CD4-positive, alpha-beta memory T cell (primary cell): ENCODE measurements at regions of chr12 and their contacts with region 1.

Region 1: GRCh38 chr12:45728630-45729232 is 775 bp upstream of the ARID2 start:
- DNase-seq: peak; percentile 97 to 98 (median 98)
- H3K4me3 ChIP-seq: peak overlapping the region; percentile 78 to 89
- H3K4me3 Mint-ChIP-seq: peak overlapping the region; percentile 92 to 100 (median 100)
- H3K27ac ChIP-seq: peak overlapping the region; percentile 98
- H3K27ac Mint-ChIP-seq: peak overlapping the region; percentile 87 to 99 (median 99)
- H3K4me1 ChIP-seq: peaks cover 41% of the 10 kb centered on the region
- H3K4me1 Mint-ChIP-seq: peaks cover 18 to 56% (median 24%) of the 10 kb centered on the region in 4 donors
- H3K27me3 ChIP-seq: no peaks in the 10 kb centered on the region
- H3K27me3 Mint-ChIP-seq: no peaks in the 10 kb centered on the region

Region 2: DNA sequence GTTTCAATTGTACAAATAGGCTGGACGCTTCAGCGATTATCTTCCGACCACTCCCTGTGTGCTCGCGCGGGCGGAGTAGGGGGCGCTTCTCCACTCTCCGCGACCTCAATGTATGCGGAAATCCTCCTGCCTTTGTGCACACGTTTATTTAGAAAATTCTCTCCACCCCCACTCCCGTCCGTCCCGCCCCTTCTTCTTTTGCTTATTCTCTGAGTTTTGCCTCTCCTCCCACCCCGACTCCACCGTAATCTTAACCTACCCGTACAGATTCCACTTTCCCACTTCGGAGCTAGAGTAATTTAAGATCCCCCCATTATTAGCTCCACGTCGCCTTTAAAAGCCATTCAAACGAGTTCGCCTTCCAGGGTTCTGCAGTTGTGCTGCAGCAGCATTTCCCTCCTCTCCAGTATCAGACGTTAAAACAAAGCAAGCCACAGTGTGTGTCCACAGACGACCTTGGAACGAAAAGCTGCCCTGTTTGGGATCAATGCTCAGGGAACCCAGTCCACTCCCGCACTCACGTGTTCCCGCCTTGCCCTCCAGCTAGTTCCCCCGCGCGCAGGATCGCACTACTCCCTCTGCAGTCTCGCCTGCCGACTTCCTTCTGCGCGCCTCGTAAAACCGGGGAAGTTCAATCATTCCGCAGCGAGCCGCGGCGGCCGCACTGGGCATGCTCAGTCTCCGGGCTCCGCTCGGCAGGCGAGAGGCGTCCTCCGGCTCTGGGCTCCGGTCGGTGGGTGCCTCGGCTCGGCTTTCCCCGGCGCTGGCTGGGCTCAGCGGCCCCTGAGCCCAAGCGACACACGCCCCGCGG is 513.1 kb before region 1 on chr12 and contains the start of gene ANO6:
- CTCF ChIA-PET with region 1: interaction called, 4 read pairs
- POLR2A ChIA-PET with region 1: interaction called, 20 read pairs
- intact Hi-C with region 1: loop called (anchors 1 kb)
- DNase-seq: peak; percentile 73 to 81 (median 76)
- H3K4me3 ChIP-seq: peak within 1 kb of the TSS; percentile 68 to 94
- H3K4me3 Mint-ChIP-seq: peak within 1 kb of the TSS; percentile 92 to 99 (median 96)
- H3K27ac ChIP-seq: peak within 1 kb of the TSS; percentile 69
- H3K27ac Mint-ChIP-seq: peak within 1 kb of the TSS; percentile 81 to 98 (median 95)
- H3K4me1 ChIP-seq: peaks cover 48% of the 10 kb centered on the region
- H3K4me1 Mint-ChIP-seq: peaks cover 34 to 77% (median 53%) of the 10 kb centered on the region in 4 donors
- H3K27me3 ChIP-seq: no peaks in the 10 kb centered on the region
- H3K27me3 Mint-ChIP-seq: no peaks in the 10 kb centered on the region
- total RNA-seq, gene ANO6: 29.5 to 32.6 TPM

Region 3: GRCh38 chr12:45637706-45638105 is 91.0 kb before region 1 on chr12:
- CTCF ChIA-PET with region 1: no interaction called
- POLR2A ChIA-PET with region 1: no interaction called
- intact Hi-C with region 1: no loop called
- DNase-seq: no peak
- H3K4me3 ChIP-seq: no peak overlapping the region
- H3K4me3 Mint-ChIP-seq: no peak overlapping the region
- H3K27ac ChIP-seq: no peak overlapping the region
- H3K27ac Mint-ChIP-seq: no peak overlapping the region
- H3K4me1 ChIP-seq: no peaks in the 10 kb centered on the region
- H3K4me1 Mint-ChIP-seq: peaks cover 0 to 4% (median 1%) of the 10 kb centered on the region in 4 donors
- H3K27me3 ChIP-seq: no peaks in the 10 kb centered on the region
- H3K27me3 Mint-ChIP-seq: peaks cover 0 to 1% of the 10 kb centered on the region in 2 donors

Region 4: DNA sequence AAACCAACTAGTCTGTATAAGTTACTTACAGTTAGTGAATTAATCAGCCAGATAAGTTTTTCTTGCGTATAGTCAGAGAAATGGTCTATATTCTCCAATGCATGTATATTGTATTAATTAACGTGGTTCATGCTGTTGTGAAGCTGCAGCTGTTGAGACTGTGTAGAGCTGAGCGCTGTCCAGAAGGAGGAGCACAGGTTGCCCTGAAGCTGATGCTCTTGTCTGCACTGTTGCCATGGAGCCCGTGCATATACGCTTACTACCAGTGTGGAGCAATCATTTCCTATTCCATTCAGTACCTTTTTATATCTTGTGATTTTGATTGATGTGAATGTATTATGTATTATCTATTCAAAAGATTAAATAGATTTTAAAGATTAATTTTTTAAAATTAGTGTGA is 73.5 kb before region 1 on chr12:
- CTCF ChIA-PET with region 1: interaction called, 43 read pairs
- POLR2A ChIA-PET with region 1: interaction called, 15 read pairs
- intact Hi-C with region 1: loop called (anchors 1 kb)
- DNase-seq: peak; percentile 49 to 81 (median 70)
- H3K4me3 ChIP-seq: no peak overlapping the region
- H3K4me3 Mint-ChIP-seq: no peak overlapping the region
- H3K27ac ChIP-seq: no peak overlapping the region
- H3K27ac Mint-ChIP-seq: no peak overlapping the region
- H3K4me1 ChIP-seq: no peaks in the 10 kb centered on the region
- H3K4me1 Mint-ChIP-seq: peaks cover 0 to 8% (median 4%) of the 10 kb centered on the region in 4 donors
- H3K27me3 ChIP-seq: no peaks in the 10 kb centered on the region
- H3K27me3 Mint-ChIP-seq: peaks cover 8 to 9% of the 10 kb centered on the region in 2 donors

Region 5: GRCh38 chr12:45745861-45746277 is 17.1 kb after region 1 on chr12:
- CTCF ChIA-PET with region 1: interaction called, 94 read pairs
- POLR2A ChIA-PET with region 1: interaction called, 59 read pairs
- intact Hi-C with region 1: loop called (anchors 1 kb)
- DNase-seq: peak in 4 of 5 donors; percentile 37 to 57 (median 48)
- H3K4me3 ChIP-seq: no peak overlapping the region
- H3K4me3 Mint-ChIP-seq: no peak overlapping the region
- H3K27ac ChIP-seq: no peak overlapping the region
- H3K27ac Mint-ChIP-seq: peak overlapping the region in 2 of 7 donors; percentile 12 to 64
- H3K4me1 ChIP-seq: peaks cover 50% of the 10 kb centered on the region
- H3K4me1 Mint-ChIP-seq: peaks cover 37 to 73% (median 50%) of the 10 kb centered on the region in 4 donors
- H3K27me3 ChIP-seq: no peaks in the 10 kb centered on the region
- H3K27me3 Mint-ChIP-seq: no peaks in the 10 kb centered on the region

Region 6: GRCh38 chr12:45933504-45933903 is 204.8 kb after region 1 on chr12:
- CTCF ChIA-PET with region 1: no interaction called
- POLR2A ChIA-PET with region 1: no interaction called
- intact Hi-C with region 1: loop called (anchors 5 kb)
- DNase-seq: no peak
- H3K4me3 ChIP-seq: no peak overlapping the region
- H3K4me3 Mint-ChIP-seq: no peak overlapping the region
- H3K27ac ChIP-seq: no peak overlapping the region
- H3K27ac Mint-ChIP-seq: peak overlapping the region in 3 of 7 donors; percentile 6 to 72 (median 38)
- H3K4me1 ChIP-seq: no peaks in the 10 kb centered on the region
- H3K4me1 Mint-ChIP-seq: peaks cover 6 to 15% (median 12%) of the 10 kb centered on the region in 4 donors
- H3K27me3 ChIP-seq: no peaks in the 10 kb centered on the region
- H3K27me3 Mint-ChIP-seq: no peaks in the 10 kb centered on the region